ENCODE measurements at regions of chr6 and their contacts with region 1.

Region 1: GRCh38 chr6:101666256-101666655 is 272.7 kb downstream of the GRIK2 start:
- DNase-seq: peak; percentile 93
- H3K4me3 Mint-ChIP-seq: no peak overlapping the region
- H3K27ac Mint-ChIP-seq: no peak overlapping the region
- H3K4me1 Mint-ChIP-seq: peaks cover 32% of the 10 kb centered on the region
- H3K27me3 Mint-ChIP-seq: no peaks in the 10 kb centered on the region
- CTCF ChIP-seq: no peak

Region 2: GRCh38 chr6:101722991-101723579 is 56.8 kb after region 1 on chr6:
- CTCF ChIA-PET with region 1: no interaction called
- POLR2A ChIA-PET with region 1: no interaction called
- intact Hi-C with region 1: loop called (anchors 5 kb)
- DNase-seq: peak; percentile 86
- H3K4me3 Mint-ChIP-seq: no peak overlapping the region
- H3K27ac Mint-ChIP-seq: peak overlapping the region; percentile 78
- H3K4me1 Mint-ChIP-seq: peaks cover 17% of the 10 kb centered on the region
- H3K27me3 Mint-ChIP-seq: no peaks in the 10 kb centered on the region
- CTCF ChIP-seq: no peak

Region 3: GRCh38 chr6:101986476-101986875 is 320.2 kb after region 1 on chr6:
- CTCF ChIA-PET with region 1: no interaction called
- POLR2A ChIA-PET with region 1: no interaction called
- intact Hi-C with region 1: no loop called
- DNase-seq: no peak
- H3K4me3 Mint-ChIP-seq: no peak overlapping the region
- H3K27ac Mint-ChIP-seq: no peak overlapping the region
- H3K4me1 Mint-ChIP-seq: no peaks in the 10 kb centered on the region
- H3K27me3 Mint-ChIP-seq: no peaks in the 10 kb centered on the region
- CTCF ChIP-seq: no peak